Activated CD4-positive, alpha-beta T cell treated with anti-CD3 and anti-CD28 coated beads for 36 hours (primary cell): ENCODE measurements at regions of chr16 and their contacts with region 1.

Region 1: DNA sequence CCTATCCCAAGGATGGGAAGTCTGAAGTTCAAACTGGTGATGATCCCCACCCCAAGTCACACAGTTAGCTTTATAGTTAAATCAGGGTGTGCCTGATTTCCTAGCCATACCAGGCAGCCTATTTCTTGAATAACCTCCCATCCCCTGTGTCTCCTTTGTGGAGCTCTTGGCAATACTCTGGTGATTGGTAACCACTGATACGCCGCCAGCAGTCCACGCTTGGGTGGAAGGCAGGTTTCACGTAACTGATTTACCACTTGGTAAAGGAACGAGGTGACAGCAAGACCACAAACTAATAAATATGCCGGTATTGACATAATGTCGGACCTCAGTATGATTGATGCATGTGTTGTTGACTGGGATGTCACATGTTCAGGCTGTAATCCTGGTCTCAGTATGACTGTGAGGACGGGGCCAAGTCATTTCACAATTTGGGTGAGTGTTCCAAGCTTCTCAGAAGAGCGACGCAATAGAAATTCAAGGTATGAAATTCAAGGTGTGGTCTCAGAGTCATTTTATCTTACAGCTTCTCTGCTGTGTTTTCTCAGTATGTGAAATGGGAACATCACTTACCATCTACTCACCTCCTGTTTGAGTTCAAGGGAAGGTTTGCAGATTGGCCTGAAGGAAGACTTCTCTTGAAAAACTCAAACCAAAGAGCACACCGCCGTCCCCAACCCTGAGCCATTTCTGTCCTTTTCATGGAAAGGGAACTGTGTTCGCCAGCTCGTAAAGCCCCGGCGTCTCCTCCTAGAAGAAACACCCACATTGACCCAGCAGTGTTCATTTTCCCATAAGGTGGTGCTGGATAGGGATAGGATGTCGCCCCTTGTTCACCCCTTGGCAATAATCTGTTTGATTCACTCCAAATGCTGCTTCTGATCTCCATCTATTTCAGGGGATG is 678.9 kb downstream of the WWOX start:
- DNase-seq: peak; percentile 77
- ATAC-seq: peak; percentile 66
- H3K4me3 Mint-ChIP-seq: peak overlapping the region; percentile 41
- H3K27ac Mint-ChIP-seq: peak overlapping the region; percentile 94
- H3K4me1 Mint-ChIP-seq: peaks cover 70% of the 10 kb centered on the region
- H3K27me3 Mint-ChIP-seq: no peaks in the 10 kb centered on the region

Region 2: DNA sequence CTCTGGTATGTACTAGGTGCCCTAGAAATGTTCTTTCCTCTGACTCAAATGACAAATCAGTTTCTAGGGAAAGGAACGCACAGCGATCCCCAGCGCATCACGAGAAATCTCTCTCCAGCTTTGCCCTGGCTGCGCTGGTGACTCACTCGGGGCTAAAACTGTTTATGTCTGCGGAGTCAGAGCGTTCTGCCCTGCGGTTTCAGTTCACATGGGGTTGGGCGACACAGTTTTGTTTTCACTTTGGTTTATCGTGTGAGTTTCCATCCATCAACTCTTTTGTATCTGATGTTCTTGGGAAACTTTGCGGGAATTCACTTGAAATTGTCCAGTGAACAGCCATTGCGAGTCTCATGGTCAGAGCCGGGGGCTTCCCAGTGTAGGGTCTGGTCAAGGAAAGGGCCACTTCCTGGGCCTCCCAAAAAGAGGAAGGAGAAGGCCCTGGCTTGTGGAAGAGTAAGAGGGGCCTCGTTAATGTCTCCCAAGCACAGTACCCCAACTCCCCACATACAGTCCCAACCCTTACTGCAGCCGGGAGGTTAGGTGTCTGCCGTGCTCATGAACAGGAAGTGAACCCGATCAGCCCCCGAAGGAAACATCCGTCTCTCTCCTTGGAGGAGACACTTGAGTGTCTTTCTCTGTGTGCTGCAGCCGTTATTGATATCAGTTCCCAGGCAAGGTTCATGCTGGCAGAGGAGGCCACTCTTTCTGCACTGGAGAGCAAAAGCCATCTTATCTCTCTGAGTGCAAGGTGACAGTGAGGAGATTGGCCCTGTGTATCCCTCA is 35.7 kb before region 1 on chr16:
- CTCF ChIA-PET with region 1: no interaction called
- POLR2A ChIA-PET with region 1: interaction called, 3 read pairs
- intact Hi-C with region 1: loop called (anchors 1 kb)
- DNase-seq: peak; percentile 89
- ATAC-seq: peak; percentile 95
- H3K4me3 Mint-ChIP-seq: peak overlapping the region; percentile 61
- H3K27ac Mint-ChIP-seq: peak overlapping the region; percentile 96
- H3K4me1 Mint-ChIP-seq: peaks cover 22% of the 10 kb centered on the region
- H3K27me3 Mint-ChIP-seq: no peaks in the 10 kb centered on the region

Region 3: DNA sequence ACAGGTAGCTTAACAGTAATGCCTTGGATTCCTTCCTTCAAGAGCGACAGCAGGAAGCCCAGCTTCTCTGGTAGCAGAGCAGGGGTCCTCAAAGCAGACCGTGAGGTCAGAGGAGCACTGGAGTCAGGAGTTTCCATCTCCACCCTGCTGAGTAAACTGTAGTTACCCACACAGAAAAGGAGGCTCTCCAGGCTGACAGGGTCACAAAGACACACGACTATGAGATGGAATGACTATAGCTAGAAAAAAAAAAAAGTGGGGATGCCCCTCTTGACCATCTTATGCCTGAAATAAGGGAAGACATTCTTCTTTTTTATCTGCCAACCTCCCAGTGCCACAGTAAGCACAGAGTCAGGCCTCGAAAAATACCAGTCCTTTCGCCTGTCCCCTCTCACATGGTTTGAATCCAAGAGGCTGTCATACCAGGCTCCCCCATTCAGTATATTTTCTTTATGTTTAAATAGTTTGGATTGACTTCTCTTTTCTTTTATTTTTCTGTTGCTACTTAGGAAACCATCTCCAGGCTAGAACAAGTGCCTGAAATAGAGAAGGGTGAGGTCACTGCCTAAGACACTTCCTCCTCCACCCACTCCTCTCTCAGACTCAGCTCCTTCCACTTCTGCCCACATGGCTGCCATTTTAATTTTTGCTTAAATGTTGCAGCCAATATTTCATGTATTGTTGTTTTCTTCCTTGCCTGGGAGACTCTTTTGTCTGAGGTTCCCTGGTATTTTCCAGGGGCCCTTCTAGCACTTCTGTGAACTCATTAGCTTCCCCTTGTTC is 114.8 kb after region 1 on chr16:
- CTCF ChIA-PET with region 1: interaction called, 8 read pairs
- POLR2A ChIA-PET with region 1: interaction called, 15 read pairs
- intact Hi-C with region 1: loop called (anchors 1 kb)
- DNase-seq: peak; percentile 39
- ATAC-seq: peak; percentile 65
- H3K4me3 Mint-ChIP-seq: no peak overlapping the region
- H3K27ac Mint-ChIP-seq: peak overlapping the region; percentile 80
- H3K4me1 Mint-ChIP-seq: peaks cover 61% of the 10 kb centered on the region
- H3K27me3 Mint-ChIP-seq: no peaks in the 10 kb centered on the region

Region 4: GRCh38 chr16:78962457-78962929 is 184.1 kb after region 1 on chr16:
- CTCF ChIA-PET with region 1: interaction called, 3 read pairs
- POLR2A ChIA-PET with region 1: interaction called, 7 read pairs
- intact Hi-C with region 1: loop called (anchors 1 kb)
- DNase-seq: no peak
- ATAC-seq: peak; percentile 86
- H3K4me3 Mint-ChIP-seq: no peak overlapping the region
- H3K27ac Mint-ChIP-seq: peak overlapping the region; percentile 86
- H3K4me1 Mint-ChIP-seq: peaks cover 23% of the 10 kb centered on the region
- H3K27me3 Mint-ChIP-seq: no peaks in the 10 kb centered on the region

Region 5: DNA sequence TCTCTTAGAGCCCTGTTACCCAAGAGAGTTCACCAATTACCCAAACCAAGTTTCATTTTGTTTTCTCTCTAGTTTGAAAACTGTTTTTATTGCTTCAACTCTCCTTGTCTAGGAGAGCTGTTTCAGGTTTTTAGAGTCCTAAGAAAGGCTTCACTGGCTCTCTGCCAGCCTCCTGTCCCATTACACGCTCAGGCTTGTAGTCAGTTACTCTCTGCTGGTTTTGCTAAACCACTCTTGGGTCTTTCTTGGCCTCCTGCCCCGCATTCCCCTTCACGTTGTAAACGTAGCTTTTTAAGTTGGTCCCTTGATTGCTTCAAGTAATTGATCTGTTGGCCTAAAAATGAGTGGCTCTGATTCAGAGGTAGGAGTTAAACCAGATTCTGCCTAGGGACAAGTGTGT is 293.1 kb after region 1 on chr16:
- CTCF ChIA-PET with region 1: interaction called, 4 read pairs
- POLR2A ChIA-PET with region 1: interaction called, 7 read pairs
- intact Hi-C with region 1: loop called (anchors 1 kb)
- DNase-seq: no peak
- ATAC-seq: no peak
- H3K4me3 Mint-ChIP-seq: no peak overlapping the region
- H3K27ac Mint-ChIP-seq: peak overlapping the region; percentile 34
- H3K4me1 Mint-ChIP-seq: peaks cover 64% of the 10 kb centered on the region
- H3K27me3 Mint-ChIP-seq: peaks cover 2% of the 10 kb centered on the region

Region 6: GRCh38 chr16:79628501-79628975 is 850.2 kb after region 1 on chr16:
- CTCF ChIA-PET with region 1: no interaction called
- POLR2A ChIA-PET with region 1: no interaction called
- intact Hi-C with region 1: loop called in 1 of 2 experiments (anchors 1 kb)
- DNase-seq: peak; percentile 86
- ATAC-seq: peak; percentile 94
- H3K4me3 Mint-ChIP-seq: no peak overlapping the region
- H3K27ac Mint-ChIP-seq: peak overlapping the region; percentile 71
- H3K4me1 Mint-ChIP-seq: peaks cover 14% of the 10 kb centered on the region
- H3K27me3 Mint-ChIP-seq: peaks cover 24% of the 10 kb centered on the region